ENCODE measurements at regions of chr2 and their contacts with region 1.

Region 1: DNA sequence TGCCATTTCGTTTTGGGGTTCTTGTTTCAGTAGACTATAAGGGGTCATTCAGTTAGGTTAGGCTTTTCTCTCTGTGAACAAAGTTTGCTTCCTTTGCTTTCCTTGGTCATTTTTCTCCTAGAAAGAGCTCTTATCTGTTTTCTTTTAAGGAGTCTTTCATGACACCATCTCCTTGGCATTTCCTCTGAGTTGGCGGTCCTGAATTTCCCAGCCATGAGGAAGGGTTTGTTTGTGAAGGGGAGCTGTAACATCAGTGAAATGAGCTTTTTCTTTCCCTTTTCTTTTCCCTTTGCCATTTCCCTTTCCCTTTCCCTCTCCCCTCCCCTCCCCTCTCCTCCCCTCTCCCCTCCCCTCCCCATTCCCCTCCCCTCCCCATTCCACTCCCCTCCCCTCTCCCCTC is 61.7 kb downstream of the MAP4K4 start:
- DNase-seq: no peak
- CTCF ChIP-seq: no peak

Region 2: GRCh38 chr2:102119255-102119654 is 360.1 kb after region 1 on chr2:
- CTCF ChIA-PET with region 1: no interaction called
- POLR2A ChIA-PET with region 1: interaction called, 12 read pairs
- DNase-seq: no peak
- CTCF ChIP-seq: no peak

Measured in GM10248 (cell line).